CD8-positive, alpha-beta T cell (primary cell): ENCODE measurements at regions of chr5 and their contacts with region 1.

Region 1: DNA sequence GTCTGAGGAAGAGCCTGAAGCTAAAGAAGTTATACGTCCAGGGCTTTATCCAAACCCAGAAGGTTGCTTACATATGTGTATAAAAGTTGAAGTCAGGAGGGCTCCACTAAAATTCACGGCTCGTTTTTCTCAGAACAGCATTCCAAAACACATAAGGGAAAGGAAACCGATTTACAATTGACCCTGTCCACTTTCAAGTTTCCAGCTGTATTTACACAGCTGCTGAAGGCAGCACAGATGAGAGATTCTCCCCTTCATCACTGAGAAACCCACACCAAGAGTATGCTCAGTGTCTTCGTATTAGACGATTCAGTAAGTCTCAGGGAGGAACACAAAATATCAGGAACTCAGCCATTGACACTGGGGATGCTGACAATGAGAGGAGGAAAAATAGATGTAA is 5.9 kb upstream of the NREP start:
- DNase-seq: no peak
- ATAC-seq: no peak
- H3K4me3 ChIP-seq: no peak overlapping the region
- H3K4me3 Mint-ChIP-seq: no peak overlapping the region
- H3K27ac ChIP-seq: no peak overlapping the region
- H3K27ac Mint-ChIP-seq: no peak overlapping the region
- H3K4me1 ChIP-seq: no peaks in the 10 kb centered on the region
- H3K4me1 Mint-ChIP-seq: peaks cover 6% of the 10 kb centered on the region
- H3K27me3 ChIP-seq: no peaks in the 10 kb centered on the region
- H3K27me3 Mint-ChIP-seq: no peaks in the 10 kb centered on the region
- CTCF ChIP-seq: no peak

Region 2: DNA sequence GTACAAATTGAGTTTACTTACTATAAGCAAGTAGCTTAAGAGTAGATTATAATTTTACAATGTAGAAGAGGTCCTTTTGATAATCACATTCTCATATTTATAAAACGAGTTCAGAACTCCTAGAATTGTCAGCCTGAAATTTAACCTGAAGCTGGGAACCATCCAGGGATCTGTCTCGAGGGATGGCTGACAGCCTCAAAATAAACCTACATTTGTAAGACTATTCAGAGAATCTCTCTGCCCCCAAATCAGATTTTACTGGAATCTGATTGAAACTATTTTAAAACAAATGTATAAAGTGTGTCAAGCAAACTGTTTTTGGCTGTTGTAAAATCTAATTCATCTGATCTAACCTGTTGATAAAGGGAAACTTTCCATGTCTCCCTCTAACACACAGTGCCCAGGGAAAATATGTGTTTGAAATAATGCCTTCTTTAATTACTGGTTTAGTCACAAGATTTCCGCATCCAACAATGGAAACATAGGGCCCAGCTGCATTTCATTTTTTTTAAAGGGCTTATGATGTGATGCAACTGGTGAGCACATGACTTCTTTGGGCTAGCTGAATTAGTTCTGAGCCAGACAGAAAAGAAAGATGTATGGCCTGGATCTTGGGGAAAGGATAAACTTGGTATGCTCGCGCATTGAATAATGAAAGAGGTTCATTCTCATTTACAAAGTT is 993.8 kb before region 1 on chr5:
- CTCF ChIA-PET with region 1: no interaction called
- POLR2A ChIA-PET with region 1: no interaction called
- intact Hi-C with region 1: loop called in 1 of 2 experiments (anchors 10 kb)
- DNase-seq: no peak
- ATAC-seq: no peak
- H3K4me3 ChIP-seq: no peak overlapping the region
- H3K4me3 Mint-ChIP-seq: no peak overlapping the region
- H3K27ac ChIP-seq: no peak overlapping the region
- H3K27ac Mint-ChIP-seq: no peak overlapping the region
- H3K4me1 ChIP-seq: no peaks in the 10 kb centered on the region
- H3K4me1 Mint-ChIP-seq: no peaks in the 10 kb centered on the region
- H3K27me3 ChIP-seq: no peaks in the 10 kb centered on the region
- H3K27me3 Mint-ChIP-seq: no peaks in the 10 kb centered on the region
- CTCF ChIP-seq: no peak

Region 3: DNA sequence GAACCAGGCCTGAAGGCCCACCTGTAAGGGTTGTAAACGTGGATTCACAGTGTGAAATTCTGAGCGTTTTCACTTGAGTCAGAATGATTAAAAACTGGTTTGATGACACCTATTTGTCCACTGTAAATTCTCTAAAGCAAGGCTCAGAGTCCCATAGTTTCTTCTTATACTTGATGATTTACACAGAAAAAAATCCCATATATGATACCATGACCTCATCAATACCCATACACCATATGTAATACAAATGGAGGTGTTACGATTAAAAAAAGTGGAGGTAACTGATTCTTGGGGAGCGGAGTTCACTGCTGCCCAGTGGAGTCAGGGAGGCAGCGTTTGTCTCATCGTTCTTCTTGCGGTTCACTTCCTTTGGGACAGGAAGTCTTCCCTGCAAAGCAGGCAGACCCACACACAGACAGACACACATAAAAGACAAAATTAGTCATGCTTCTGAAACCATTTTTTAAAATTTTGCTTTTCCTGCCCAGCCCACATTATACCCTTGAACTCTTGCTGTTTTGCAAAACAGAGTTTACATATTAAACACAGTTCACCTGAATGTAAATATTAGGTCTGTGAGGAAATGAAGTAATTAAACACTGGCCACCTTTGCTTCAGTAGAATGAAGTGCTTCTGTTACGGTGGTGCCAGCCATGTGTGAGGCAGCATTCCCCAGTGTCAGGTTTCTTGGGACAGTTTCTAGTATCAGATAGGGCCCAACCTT is 32.1 kb before region 1 on chr5:
- CTCF ChIA-PET with region 1: no interaction called
- POLR2A ChIA-PET with region 1: no interaction called
- intact Hi-C with region 1: no loop called
- DNase-seq: no peak
- ATAC-seq: no peak
- H3K4me3 ChIP-seq: no peak overlapping the region
- H3K4me3 Mint-ChIP-seq: no peak overlapping the region
- H3K27ac ChIP-seq: no peak overlapping the region
- H3K27ac Mint-ChIP-seq: no peak overlapping the region
- H3K4me1 ChIP-seq: no peaks in the 10 kb centered on the region
- H3K4me1 Mint-ChIP-seq: peaks cover 4% of the 10 kb centered on the region
- H3K27me3 ChIP-seq: no peaks in the 10 kb centered on the region
- H3K27me3 Mint-ChIP-seq: no peaks in the 10 kb centered on the region
- CTCF ChIP-seq: no peak